ENCODE measurements at regions of chr3 and their contacts with region 1.

Region 1: DNA sequence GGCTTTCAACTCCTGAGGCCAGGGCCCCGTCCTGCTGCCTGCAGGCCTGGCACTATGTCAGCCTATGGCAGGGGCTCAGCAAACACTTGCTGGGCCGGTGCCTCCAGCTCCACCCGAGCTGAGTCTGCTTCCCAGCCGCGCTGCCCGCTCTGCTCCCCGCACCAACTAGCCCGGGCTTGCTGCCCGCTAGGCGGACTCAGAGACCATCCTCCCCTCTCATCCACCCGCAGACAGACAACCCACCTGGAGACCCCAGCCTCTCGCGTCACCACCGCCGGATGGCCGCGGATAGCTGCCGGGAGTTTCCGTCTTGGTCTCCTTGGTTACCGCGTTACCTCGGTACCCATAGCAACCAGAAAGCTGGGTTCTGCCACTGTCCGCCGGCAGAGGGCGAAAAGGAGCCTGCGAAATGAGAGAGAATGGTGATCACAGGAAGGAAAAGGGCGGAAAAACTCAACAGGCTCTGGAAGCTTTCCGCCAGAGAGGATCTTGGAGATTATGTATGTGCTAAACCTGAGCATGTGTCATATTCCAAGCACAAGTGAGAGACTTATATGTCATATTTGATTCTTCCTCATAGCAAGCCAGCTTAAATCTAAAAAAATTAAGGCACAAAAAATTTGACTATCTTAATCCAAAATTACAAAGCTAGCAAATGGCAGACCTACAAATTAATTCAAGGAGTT is at the start of gene ZBBX:
- DNase-seq: peak; percentile 89 to 95
- H3K4me3 ChIP-seq: peak within 1 kb of the TSS; percentile 32 to 52 (median 40)
- H3K27ac ChIP-seq: no peak within 1 kb of the TSS
- H3K4me1 ChIP-seq: peaks cover 0 to 11% (median 9%) of the 10 kb centered on the region in 4 donors
- H3K27me3 ChIP-seq: no peaks in the 10 kb centered on the region
- CTCF ChIP-seq: peak in 5 of 7 experiments; percentile 67 to 85 (median 79)
- EP300 ChIP-seq: no peak
- POLR2A ChIP-seq: no peak
- total RNA-seq, gene ZBBX: 1.7 TPM in 1 of 5 donors, not detected in the others

Region 2: DNA sequence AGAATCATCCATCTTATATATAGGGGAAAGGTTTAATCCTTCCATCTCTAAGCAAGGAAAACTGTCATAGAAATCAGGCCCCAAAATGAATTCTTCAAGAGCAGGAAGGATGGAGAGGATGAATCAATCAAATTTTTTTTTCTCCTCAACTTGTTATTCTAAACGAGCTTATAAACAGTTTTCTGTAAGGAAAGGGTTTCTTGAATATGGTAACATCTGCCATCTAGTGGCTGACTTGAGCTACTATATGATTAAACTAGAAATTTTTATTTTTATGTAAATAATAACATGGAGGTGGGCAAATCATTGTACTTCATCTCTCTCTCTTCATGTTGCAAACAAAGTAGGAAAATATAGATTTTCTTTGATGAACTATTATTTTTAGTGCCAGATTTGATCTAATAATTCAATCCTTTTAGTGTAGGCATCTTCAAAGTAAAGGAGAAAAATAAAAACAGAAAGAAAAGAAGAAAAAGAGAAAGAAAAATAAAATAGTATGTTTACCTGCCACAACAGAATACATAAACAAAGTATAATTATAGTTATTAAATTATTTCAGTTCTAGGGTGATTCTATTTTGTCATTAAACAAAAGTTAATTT is 502.0 kb after region 1 on chr3:
- intact Hi-C with region 1: loop called (anchors 10 kb)
- DNase-seq: peak in 1 of 2 donors; percentile 78
- H3K4me3 ChIP-seq: no peak overlapping the region
- H3K27ac ChIP-seq: no peak overlapping the region
- H3K4me1 ChIP-seq: peaks cover 0 to 16% (median 9%) of the 10 kb centered on the region in 4 donors
- H3K27me3 ChIP-seq: no peaks in the 10 kb centered on the region
- CTCF ChIP-seq: peak in 4 of 7 experiments; percentile 42 to 64 (median 52)
- EP300 ChIP-seq: no peak
- POLR2A ChIP-seq: no peak

Measured in stomach (tissue), 19 donors.